ENCODE measurements at regions of chr3 and their contacts with region 1.

Region 1: DNA sequence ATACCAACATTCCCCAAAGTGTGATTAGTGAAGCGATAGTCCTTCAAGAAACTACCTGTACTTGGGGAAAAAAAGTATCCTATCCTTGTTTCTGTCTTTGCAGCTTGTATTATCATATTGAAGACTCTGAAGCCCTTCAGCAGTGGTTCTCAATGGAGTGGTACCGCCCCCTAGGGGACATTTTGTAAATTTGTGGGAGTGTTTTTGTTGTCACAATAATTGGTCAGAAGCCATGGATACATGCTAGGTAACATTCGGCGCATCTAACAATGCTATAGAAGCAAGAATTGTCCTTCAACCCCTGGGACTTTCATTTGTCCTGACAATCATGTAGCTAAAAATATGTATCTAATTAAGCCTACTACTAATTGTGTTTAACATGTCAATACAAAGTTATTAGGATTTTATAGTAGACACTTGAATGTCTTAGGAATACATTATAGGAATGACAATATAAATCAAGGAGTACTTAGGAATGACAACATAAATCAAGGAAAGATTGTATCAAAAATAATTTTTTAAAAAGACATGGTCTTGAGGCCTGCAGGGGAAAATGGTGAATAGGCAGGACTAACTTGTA is 53.7 kb downstream of the NMD3 start:
- H3K4me3 Mint-ChIP-seq: no peak overlapping the region
- H3K27ac Mint-ChIP-seq: no peak overlapping the region
- H3K4me1 Mint-ChIP-seq: no peaks in the 10 kb centered on the region
- H3K27me3 Mint-ChIP-seq: no peaks in the 10 kb centered on the region

Region 2: DNA sequence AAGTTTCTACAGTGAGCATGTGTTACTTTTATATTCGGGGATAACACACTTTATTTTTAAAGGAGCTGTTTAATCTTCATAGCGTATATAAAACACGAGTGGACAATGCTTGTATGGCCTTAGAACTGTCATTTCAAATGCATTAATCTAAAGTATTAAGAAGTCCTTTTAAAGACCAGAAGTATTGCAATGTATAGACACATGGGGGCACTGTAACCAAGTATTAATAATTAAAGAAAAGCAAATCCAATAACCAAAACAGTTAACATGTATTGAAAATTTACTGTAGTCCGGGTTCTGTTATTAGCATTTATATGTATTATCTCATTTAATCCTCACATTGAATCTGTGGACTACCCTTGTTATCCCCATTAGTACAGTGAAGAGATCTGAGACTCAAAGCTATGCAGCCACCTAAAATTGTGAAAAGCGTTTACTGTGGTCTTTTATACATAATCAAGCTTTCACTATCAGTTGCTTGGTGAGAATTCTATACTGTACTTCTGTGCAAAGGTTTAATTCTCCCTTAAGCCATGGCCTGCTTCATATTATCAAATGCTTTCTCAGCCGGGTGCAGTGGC is 587.8 kb before region 1 on chr3:
- intact Hi-C with region 1: loop called (anchors 2 kb)
- H3K4me3 Mint-ChIP-seq: no peak overlapping the region
- H3K27ac Mint-ChIP-seq: no peak overlapping the region
- H3K4me1 Mint-ChIP-seq: peaks cover 5% of the 10 kb centered on the region
- H3K27me3 Mint-ChIP-seq: no peaks in the 10 kb centered on the region

Region 3: DNA sequence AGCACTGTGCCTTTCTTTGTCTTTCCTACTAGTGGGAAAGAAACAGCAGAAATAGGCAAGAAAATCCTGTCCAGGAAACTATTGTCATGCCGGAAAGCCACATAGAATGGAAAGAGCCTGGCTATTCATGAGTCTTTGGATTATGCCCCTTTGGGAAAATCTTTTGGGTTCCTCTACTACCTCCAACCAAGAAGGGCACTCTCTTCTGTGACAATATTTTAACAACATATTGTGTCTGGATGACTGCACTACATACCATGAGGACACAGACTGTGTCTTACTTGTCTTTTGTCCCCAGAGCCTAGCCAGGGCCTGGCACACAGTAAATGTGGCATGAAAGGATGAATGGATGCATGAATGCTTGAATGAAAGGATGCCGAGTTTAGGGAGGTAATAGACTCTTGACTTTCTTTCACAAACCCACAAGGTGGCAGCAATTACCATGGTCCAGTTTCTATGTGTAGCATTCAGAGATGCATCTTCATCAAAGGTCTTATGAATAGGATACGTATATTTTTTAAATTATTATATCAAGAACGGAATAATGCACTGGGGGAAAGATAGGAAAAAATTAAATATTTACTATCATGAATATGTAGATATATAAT is 567.5 kb before region 1 on chr3:
- intact Hi-C with region 1: loop called (anchors 5 kb)
- H3K4me3 Mint-ChIP-seq: no peak overlapping the region
- H3K27ac Mint-ChIP-seq: no peak overlapping the region
- H3K4me1 Mint-ChIP-seq: no peaks in the 10 kb centered on the region
- H3K27me3 Mint-ChIP-seq: peaks cover 14% of the 10 kb centered on the region

Region 4: GRCh38 chr3:161050935-161051334 is 223.9 kb before region 1 on chr3:
- intact Hi-C with region 1: no loop called
- H3K4me3 Mint-ChIP-seq: no peak overlapping the region
- H3K27ac Mint-ChIP-seq: peak overlapping the region; percentile 58
- H3K4me1 Mint-ChIP-seq: peaks cover 53% of the 10 kb centered on the region
- H3K27me3 Mint-ChIP-seq: no peaks in the 10 kb centered on the region

Region 5: DNA sequence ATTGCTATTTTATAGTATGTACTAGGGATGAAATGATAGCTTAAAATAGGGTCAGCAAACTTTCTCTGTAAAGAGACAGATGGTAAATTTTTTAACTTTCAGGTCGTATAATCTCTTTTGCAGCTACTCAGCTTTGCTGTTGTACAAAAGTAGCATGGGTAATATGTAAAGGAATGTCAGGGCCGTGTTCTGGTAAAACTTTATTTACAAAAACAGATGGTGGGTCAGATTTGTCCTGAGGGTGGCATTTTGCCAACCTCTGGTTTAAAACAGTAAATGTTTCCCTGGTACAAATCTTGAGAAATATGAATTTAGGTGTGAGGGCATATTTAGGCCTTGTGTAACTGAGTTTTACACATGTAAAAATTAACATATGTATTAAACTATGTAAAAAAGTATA is 35.1 kb before region 1 on chr3:
- intact Hi-C with region 1: no loop called
- H3K4me3 Mint-ChIP-seq: no peak overlapping the region
- H3K27ac Mint-ChIP-seq: no peak overlapping the region
- H3K4me1 Mint-ChIP-seq: peaks cover 4% of the 10 kb centered on the region
- H3K27me3 Mint-ChIP-seq: no peaks in the 10 kb centered on the region

Region 6: DNA sequence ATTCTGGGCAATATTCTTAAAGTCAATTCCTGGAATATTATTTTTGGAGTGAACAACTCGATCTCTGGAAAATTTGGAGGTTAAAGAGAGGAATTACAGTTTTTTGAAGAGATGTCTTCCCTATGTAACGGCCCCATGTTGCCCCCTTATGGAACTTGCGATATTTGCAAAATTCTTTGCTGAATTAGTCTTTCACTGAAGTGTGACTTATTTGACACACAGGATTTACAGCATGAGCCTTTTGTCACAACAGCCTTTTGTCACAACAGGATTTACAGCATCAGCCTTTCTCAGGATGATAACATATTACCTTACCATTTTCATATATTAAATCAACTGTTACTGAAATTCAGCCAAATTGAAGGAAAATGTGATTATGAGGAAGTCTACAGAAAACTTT is 134.3 kb after region 1 on chr3:
- intact Hi-C with region 1: loop called (anchors 1 kb)
- H3K4me3 Mint-ChIP-seq: no peak overlapping the region
- H3K27ac Mint-ChIP-seq: no peak overlapping the region
- H3K4me1 Mint-ChIP-seq: peaks cover 7% of the 10 kb centered on the region
- H3K27me3 Mint-ChIP-seq: peaks cover 2% of the 10 kb centered on the region

Region 7: DNA sequence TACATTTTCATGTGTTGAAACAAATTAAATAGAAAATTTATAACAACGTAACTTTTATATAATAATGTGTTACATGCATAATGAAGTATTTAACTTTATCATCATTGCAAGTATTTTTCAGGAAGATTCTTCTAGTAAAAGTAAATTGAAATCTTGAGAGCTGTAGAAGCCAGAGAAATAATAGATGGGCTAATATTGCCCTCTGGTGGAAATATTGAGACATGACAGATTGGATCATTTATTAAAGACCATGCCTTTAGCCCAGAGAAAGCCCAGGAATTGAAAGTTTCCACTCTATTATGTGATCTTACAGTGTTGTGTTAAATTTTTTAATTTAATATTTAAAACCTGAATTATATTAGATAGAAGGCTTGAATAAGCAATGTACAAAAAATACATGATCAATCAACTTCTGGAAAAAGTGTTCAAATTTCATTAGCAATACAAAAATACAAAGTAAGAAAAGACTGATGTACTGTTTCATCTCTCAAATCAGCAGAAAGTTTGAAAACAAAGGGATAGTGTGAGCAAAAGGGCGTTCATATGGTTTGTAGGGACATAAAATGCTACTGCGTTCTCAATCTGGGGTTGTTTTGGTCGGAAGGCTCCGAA is 149.2 kb after region 1 on chr3:
- intact Hi-C with region 1: loop called (anchors 1 kb)
- H3K4me3 Mint-ChIP-seq: no peak overlapping the region
- H3K27ac Mint-ChIP-seq: no peak overlapping the region
- H3K4me1 Mint-ChIP-seq: no peaks in the 10 kb centered on the region
- H3K27me3 Mint-ChIP-seq: peaks cover 4% of the 10 kb centered on the region

Measured in dendritic cell treated with granulocyte-macrophage colony-stimulating factor and Interleukin-4, amounts not matched to agents 40 ng/mL and 50 ng/mL, for 4 days (primary cell).